Activated CD4-positive, alpha-beta memory T cell treated with anti-CD3 and anti-CD28 coated beads for 36 hours (primary cell): ENCODE measurements at regions of chr11 and their contacts with region 1.

Region 1: DNA sequence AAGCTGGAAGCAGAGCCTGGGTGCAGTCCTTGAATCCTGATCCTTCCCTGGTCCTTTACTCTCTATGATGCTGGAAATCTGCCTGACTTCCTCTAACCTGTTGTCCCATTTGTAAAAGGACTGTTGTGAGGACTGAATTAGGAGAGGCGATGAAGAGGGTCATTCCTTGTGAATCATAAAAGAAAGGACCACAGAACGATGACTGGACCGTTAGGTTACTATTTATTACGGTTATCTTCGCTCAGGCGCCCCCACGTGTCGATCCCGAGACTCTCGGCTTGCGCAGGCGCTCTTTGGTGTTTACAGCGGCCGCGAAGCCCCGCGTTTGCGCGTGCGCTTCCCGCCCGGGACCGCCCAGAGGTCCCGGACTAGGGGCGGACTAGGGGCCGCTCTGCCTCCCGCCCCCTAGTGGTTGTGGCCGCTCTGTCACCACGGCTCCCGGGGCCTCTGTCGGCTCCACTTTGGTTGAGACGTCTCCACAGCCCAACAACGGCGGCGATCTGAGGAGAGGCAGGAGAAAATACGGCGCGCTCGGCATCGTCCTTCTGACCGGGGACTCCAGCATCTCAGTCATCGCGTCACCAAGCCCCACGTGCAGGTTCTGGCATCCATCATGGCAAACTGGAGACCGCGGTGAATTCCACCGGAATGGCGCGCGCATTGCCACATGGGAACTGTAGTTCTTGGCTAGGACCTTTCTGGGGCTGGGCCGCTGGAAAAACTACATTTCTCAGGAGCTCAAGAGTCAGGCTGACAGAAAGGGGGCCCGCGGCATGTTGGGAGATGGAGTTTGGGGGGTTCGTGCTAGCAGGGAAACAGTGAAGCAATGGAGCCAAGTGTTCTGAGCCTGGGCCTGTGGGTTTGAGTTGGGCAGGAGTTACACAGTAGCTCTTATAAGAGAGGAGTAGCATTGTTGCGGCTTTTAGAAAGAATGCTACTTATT is at the start of gene STARD10:
- DNase-seq: peak; percentile 95
- H3K4me3 Mint-ChIP-seq: peak within 1 kb of the TSS; percentile 97
- H3K27ac Mint-ChIP-seq: peak within 1 kb of the TSS; percentile 100
- H3K4me1 Mint-ChIP-seq: peaks cover 24% of the 10 kb centered on the region
- H3K27me3 Mint-ChIP-seq: no peaks in the 10 kb centered on the region
- total RNA-seq, gene STARD10: 14.8 to 16.8 TPM

Region 2: DNA sequence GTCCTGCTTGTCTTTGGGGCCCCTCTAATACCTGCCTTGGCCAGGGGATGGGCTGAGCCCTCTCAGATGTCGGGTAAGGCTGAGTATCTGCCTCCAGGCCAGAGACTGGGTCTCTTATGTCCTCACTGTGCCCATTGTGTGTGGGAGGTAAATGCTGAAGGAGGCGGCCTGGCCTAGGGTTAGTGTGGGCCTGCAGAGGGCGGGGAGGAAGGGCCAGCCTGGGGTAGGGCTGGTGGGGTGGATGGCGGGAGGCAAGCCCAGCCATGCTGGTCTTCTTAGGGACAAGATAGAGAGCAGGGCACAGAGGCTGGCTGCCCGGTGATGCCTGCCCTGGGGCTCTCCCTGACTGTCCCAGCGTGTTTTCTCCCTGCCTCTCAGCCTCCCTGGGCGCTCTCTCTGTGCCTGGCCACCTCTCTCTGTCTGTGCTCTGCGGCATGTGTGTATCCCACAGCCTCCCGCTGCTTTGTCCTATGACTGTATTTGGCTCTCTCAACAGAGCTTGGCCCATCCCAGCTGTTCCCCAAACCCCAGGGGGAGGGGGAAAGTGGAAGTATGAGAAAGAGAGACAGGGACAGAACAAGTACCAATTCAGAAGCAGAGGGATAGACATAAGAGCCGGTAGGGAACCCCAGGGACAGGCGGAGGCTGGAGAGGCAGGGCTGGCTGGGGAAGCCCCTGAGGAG is 176.5 kb before region 1 on chr11:
- CTCF ChIA-PET with region 1: no interaction called
- POLR2A ChIA-PET with region 1: no interaction called
- intact Hi-C with region 1: no loop called
- DNase-seq: no peak
- H3K4me3 Mint-ChIP-seq: no peak overlapping the region
- H3K27ac Mint-ChIP-seq: no peak overlapping the region
- H3K4me1 Mint-ChIP-seq: peaks cover 18% of the 10 kb centered on the region
- H3K27me3 Mint-ChIP-seq: peaks cover 12% of the 10 kb centered on the region

Region 3: DNA sequence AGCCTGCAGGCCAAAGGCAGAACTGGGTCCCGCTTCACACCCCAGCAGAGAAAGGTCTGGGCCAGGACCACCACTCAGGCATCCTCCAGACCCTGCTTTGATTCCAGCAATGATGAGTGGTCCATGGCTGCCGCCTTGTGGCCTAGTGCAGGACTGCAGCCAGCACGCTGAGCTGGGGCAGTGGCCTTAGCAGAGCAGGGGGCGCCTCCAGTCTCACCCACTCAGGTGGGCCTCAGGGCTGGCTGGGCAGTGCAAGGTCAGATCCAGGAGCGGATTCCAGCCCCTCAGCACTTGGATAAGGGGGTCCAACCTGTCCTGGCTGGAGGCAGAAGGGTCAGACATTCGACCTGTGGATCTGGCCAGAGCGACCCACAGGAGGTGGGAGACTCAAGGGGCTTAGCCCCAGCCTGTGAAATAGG is 109.9 kb before region 1 on chr11:
- CTCF ChIA-PET with region 1: interaction called, 17 read pairs
- POLR2A ChIA-PET with region 1: no interaction called
- intact Hi-C with region 1: no loop called
- DNase-seq: peak; percentile 79
- H3K4me3 Mint-ChIP-seq: no peak overlapping the region
- H3K27ac Mint-ChIP-seq: no peak overlapping the region
- H3K4me1 Mint-ChIP-seq: peaks cover 17% of the 10 kb centered on the region
- H3K27me3 Mint-ChIP-seq: peaks cover 4% of the 10 kb centered on the region

Region 4: DNA sequence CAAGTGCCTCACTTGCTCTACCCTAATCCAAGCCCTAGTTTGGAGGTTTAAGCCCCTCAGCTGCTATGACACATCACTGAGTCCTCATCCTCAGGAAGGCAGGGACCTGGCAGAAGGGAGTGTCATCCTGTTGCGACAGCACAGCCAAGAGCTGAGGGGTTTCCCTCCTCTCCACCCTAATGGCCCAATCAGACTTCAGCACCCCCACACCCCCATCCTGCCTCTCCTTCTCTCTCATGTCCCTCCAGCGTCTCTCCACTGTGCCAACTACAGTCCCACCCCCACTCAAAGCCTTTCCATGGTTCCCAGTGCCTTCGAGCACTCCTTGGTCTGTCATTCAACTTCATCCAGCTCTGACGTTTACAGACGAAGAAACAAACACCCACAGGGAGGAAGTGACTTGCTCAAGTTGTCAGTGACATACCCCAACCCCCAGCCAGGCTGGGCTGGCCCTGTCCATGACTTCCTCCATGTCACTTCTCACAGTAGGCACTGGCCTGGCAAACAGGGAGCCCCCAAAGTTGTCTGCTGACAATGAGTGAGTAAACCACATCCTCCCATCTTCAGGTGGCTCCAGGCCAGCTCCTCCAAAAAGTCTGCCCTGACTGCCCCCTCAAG is 57.1 kb before region 1 on chr11:
- CTCF ChIA-PET with region 1: interaction called, 12 read pairs
- POLR2A ChIA-PET with region 1: no interaction called
- intact Hi-C with region 1: loop called (anchors 1 kb)
- DNase-seq: peak; percentile 86
- H3K4me3 Mint-ChIP-seq: peak overlapping the region; percentile 24
- H3K27ac Mint-ChIP-seq: peak overlapping the region; percentile 91
- H3K4me1 Mint-ChIP-seq: peaks cover 51% of the 10 kb centered on the region
- H3K27me3 Mint-ChIP-seq: no peaks in the 10 kb centered on the region

Region 5: GRCh38 chr11:72752088-72752914 is 41.4 kb before region 1 on chr11 and contains the start of gene ARAP1:
- CTCF ChIA-PET with region 1: interaction called, 9 read pairs
- POLR2A ChIA-PET with region 1: no interaction called
- intact Hi-C with region 1: loop called (anchors 1 kb)
- DNase-seq: peak; percentile 85
- H3K4me3 Mint-ChIP-seq: peak within 1 kb of the TSS; percentile 94
- H3K27ac Mint-ChIP-seq: peak within 1 kb of the TSS; percentile 87
- H3K4me1 Mint-ChIP-seq: peaks cover 39% of the 10 kb centered on the region
- H3K27me3 Mint-ChIP-seq: no peaks in the 10 kb centered on the region
- total RNA-seq, gene ARAP1: 77.4 to 79.6 TPM

Region 6: GRCh38 chr11:72781313-72782050 is 12.2 kb before region 1 on chr11:
- CTCF ChIA-PET with region 1: interaction called, 10 read pairs
- POLR2A ChIA-PET with region 1: interaction called, 8 read pairs
- intact Hi-C with region 1: no loop called
- DNase-seq: peak; percentile 61
- H3K4me3 Mint-ChIP-seq: peak overlapping the region; percentile 69
- H3K27ac Mint-ChIP-seq: no peak overlapping the region
- H3K4me1 Mint-ChIP-seq: peaks cover 25% of the 10 kb centered on the region
- H3K27me3 Mint-ChIP-seq: no peaks in the 10 kb centered on the region